Activated naive CD4-positive, alpha-beta T cell treated with anti-CD3 and anti-CD28 coated beads for 36 hours (primary cell): ENCODE measurements at regions of chr6 and their contacts with region 1.

Region 1: GRCh38 chr6:156776840-156777576 is at the start of gene ARID1B:
- DNase-seq: peak; percentile 71
- H3K4me3 Mint-ChIP-seq: peak within 1 kb of the TSS; percentile 87
- H3K27ac Mint-ChIP-seq: peak within 1 kb of the TSS; percentile 99
- H3K4me1 Mint-ChIP-seq: peaks cover 14% of the 10 kb centered on the region
- H3K27me3 Mint-ChIP-seq: no peaks in the 10 kb centered on the region
- total RNA-seq, gene ARID1B: 42.5 to 43.2 TPM

Region 2: GRCh38 chr6:156396068-156396771 is 380.8 kb before region 1 on chr6:
- CTCF ChIA-PET with region 1: no interaction called
- intact Hi-C with region 1: loop called (anchors 5 kb)
- DNase-seq: peak; percentile 62
- H3K4me3 Mint-ChIP-seq: peak overlapping the region; percentile 57
- H3K27ac Mint-ChIP-seq: peak overlapping the region; percentile 77
- H3K4me1 Mint-ChIP-seq: peaks cover 82% of the 10 kb centered on the region
- H3K27me3 Mint-ChIP-seq: peaks cover 6% of the 10 kb centered on the region

Region 3: GRCh38 chr6:156686995-156687788 is 89.8 kb before region 1 on chr6:
- CTCF ChIA-PET with region 1: no interaction called
- intact Hi-C with region 1: loop called (anchors 1 kb)
- DNase-seq: peak; percentile 63
- H3K4me3 Mint-ChIP-seq: peak overlapping the region; percentile 82
- H3K27ac Mint-ChIP-seq: peak overlapping the region; percentile 91
- H3K4me1 Mint-ChIP-seq: peaks cover 32% of the 10 kb centered on the region
- H3K27me3 Mint-ChIP-seq: no peaks in the 10 kb centered on the region

Region 4: DNA sequence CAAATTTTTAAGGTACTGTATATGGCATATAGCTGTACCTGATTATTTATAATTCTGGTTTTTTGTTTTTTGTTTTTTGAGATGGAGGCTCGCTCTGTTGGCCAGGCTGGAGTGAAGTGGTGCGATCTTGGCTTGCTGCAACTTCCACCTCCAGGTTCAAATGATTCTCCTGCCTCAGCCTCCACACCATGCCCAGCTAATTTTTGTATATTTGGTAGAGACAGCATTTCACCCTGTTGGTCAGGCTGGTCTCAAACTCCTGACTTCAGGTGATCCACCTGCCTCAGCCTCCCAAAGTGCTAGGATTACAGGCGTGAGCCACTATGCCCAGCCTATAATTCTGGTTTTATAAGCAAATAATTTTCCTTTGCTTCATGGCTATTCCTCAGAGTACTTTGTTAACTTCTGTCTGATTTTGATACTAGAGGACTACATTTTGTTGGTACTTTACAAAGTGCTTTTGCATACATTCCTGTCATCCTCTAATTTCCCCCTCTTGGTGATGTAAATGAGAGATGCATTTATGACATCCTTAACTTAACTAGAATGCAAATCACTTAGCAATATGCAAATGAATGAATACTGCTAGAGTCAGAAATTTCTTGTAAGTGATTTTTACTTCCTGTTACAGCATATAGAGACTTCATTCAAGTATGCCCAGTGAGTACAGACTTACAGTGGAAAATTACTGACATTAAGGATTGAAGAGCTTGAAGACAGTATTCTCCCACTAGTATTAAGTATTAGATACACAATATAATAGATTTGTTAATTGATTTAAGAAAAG is 35.5 kb before region 1 on chr6:
- CTCF ChIA-PET with region 1: no interaction called
- intact Hi-C with region 1: loop called (anchors 1 kb)
- DNase-seq: no peak
- H3K4me3 Mint-ChIP-seq: peak overlapping the region; percentile 9
- H3K27ac Mint-ChIP-seq: peak overlapping the region; percentile 89
- H3K4me1 Mint-ChIP-seq: peaks cover 5% of the 10 kb centered on the region
- H3K27me3 Mint-ChIP-seq: peaks cover 2% of the 10 kb centered on the region

Region 5: DNA sequence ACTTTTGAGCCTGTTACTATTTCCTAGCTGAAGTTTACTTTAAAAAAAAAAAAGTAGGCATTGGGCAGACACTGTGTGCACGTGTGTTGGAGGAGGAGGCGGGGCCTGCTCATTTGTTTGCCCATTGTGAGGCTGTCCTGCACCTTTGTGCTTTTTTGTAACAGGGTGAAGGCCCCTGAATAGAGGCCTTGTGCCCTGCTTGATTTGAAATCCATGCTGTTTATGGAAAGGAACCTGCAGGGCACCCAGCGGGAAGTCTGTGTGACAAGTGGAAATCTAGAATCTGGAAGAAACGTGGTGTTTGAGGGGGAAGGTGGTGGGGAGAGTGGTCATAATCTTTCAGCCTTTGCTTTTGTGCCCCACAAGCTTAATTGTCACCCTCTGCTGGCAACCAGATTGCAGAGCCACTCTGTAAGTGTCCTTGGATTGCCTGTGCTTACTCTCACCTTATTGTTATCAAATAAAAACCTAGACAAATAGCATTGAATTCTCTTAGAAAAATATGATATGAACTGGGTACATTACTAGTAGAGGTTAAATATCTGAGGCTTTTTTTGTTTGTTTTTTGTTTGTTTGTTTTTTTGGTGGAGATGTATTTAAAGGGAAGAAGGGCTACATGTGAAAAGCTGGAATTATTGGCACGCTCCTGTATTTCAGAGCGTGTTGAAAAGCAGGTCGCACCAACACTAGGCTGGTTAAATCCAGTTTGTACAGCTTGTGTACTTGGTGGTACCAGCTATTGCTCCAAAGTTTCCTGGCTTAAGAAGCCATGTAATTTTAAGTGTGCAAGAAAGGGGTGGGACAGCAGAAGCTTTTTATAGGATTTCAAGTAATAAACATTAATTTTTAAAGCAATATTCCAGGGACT is 156.4 kb after region 1 on chr6:
- CTCF ChIA-PET with region 1: no interaction called
- intact Hi-C with region 1: loop called (anchors 1 kb)
- DNase-seq: no peak
- H3K4me3 Mint-ChIP-seq: no peak overlapping the region
- H3K27ac Mint-ChIP-seq: no peak overlapping the region
- H3K4me1 Mint-ChIP-seq: peaks cover 60% of the 10 kb centered on the region
- H3K27me3 Mint-ChIP-seq: no peaks in the 10 kb centered on the region

Region 6: DNA sequence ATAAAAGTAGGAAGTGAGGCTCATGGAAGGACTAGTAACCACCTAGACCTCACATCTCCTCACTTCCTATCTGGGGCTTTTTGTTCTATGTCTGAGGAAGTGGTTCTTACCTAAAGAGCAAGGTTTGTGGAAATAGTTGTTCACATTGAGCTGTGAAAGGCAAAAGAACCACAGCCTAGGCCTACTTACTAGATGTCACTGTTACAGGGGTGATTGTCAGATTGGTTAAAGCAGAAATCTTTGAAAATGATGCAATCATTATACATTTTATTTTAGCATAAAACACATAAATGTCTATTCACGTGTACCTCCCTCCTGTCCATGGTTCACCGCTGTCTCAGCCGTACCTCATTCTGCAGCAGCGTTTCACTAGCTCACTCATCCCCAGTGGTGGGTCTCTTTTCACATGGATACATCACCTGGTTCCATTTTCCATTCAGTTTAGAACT is 277.5 kb after region 1 on chr6:
- CTCF ChIA-PET with region 1: interaction called, 3 read pairs
- intact Hi-C with region 1: loop called (anchors 1 kb)
- DNase-seq: peak; percentile 67
- H3K4me3 Mint-ChIP-seq: peak overlapping the region; percentile 29
- H3K27ac Mint-ChIP-seq: peak overlapping the region; percentile 94
- H3K4me1 Mint-ChIP-seq: peaks cover 43% of the 10 kb centered on the region
- H3K27me3 Mint-ChIP-seq: no peaks in the 10 kb centered on the region

Region 7: GRCh38 chr6:157274471-157275226 is 497.6 kb after region 1 on chr6:
- CTCF ChIA-PET with region 1: no interaction called
- intact Hi-C with region 1: loop called (anchors 5 kb)
- DNase-seq: peak; percentile 86
- H3K4me3 Mint-ChIP-seq: peak overlapping the region; percentile 80
- H3K27ac Mint-ChIP-seq: peak overlapping the region; percentile 75
- H3K4me1 Mint-ChIP-seq: peaks cover 5% of the 10 kb centered on the region
- H3K27me3 Mint-ChIP-seq: no peaks in the 10 kb centered on the region